Keratinocyte (primary cell): ENCODE measurements at regions of chr21 and their contacts with region 1.

Region 1: GRCh38 chr21:29843804-29844203 is 96.0 kb downstream of the GRIK1 start:
- DNase-seq: no peak
- H3K4me3 ChIP-seq: no peak overlapping the region
- H3K27ac ChIP-seq: no peak overlapping the region
- H3K4me1 ChIP-seq: no peaks in the 10 kb centered on the region
- H3K27me3 ChIP-seq: no peaks in the 10 kb centered on the region
- CTCF ChIP-seq: no peak

Region 2: GRCh38 chr21:29586696-29587095 is 257.1 kb before region 1 on chr21:
- dilution Hi-C with region 1: no loop called
- DNase-seq: no peak
- H3K4me3 ChIP-seq: no peak overlapping the region
- H3K27ac ChIP-seq: no peak overlapping the region
- H3K4me1 ChIP-seq: no peaks in the 10 kb centered on the region
- H3K27me3 ChIP-seq: peaks cover 3% of the 10 kb centered on the region
- CTCF ChIP-seq: no peak

Region 3: DNA sequence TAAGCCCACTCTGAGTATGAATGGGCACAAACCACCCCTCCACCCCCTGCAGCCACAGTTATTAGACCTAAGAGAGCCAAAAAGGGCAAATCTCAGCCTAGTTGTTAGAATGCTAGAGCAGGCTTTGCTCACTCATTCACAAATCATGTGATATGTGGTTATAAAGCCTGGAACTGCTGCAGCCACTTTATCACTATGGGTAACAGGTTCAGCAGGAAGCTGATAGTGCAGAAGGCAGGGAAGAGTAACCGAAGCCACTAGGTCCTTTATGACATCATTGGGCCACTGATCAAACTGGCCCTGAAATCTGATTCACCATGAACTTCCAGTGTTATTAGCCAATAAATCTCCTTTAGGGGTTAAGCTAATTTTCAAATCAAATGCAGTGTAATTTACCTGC is 38.7 kb before region 1 on chr21:
- dilution Hi-C with region 1: loop called (anchors 5 kb)
- DNase-seq: no peak
- H3K4me3 ChIP-seq: no peak overlapping the region
- H3K27ac ChIP-seq: no peak overlapping the region
- H3K4me1 ChIP-seq: no peaks in the 10 kb centered on the region
- H3K27me3 ChIP-seq: no peaks in the 10 kb centered on the region
- CTCF ChIP-seq: no peak